Caco-2 (cell line): ENCODE measurements at regions of chr12 and their contacts with region 1.

Region 1: DNA sequence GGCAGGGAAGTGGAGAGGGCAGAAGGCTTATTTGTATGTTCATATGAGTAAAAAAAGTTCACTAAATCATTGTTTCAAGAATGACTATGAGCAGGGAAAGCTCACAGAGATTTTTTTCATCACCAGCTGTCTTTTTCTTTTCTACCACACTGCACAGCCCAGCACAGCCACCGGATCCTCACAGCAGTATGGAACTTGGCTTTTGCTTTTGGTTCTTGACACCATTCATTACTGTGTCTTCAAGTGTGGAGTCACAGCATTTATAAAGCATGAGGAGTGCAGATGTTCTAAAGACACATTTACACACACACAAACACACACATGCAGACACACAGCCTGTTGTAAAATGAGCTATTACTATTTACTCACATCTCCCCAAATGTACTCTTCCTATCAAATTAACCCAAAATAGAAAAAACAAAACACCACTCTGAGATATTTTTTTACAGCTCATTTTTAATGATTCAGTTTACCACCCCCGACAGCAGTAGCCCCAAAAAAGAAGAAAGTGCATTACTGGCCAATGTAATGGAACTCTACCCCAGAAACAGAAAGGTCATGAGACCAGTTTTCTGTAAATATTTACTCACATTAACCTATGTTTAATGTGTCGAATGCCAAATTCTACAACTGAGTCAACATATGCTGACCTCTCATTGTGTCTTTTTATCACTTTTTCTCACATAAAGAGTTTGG is 60.5 kb downstream of the BTG1 start:
- DNase-seq: no peak
- H3K4me3 ChIP-seq: no peak overlapping the region
- H3K4me3 Mint-ChIP-seq: no peak overlapping the region
- H3K27ac Mint-ChIP-seq: no peak overlapping the region
- H3K4me1 ChIP-seq: peaks cover 16% of the 10 kb centered on the region
- H3K4me1 Mint-ChIP-seq: peaks cover 18% of the 10 kb centered on the region
- H3K27me3 ChIP-seq: no peaks in the 10 kb centered on the region
- H3K27me3 Mint-ChIP-seq: no peaks in the 10 kb centered on the region
- CTCF ChIP-seq: no peak

Region 2: DNA sequence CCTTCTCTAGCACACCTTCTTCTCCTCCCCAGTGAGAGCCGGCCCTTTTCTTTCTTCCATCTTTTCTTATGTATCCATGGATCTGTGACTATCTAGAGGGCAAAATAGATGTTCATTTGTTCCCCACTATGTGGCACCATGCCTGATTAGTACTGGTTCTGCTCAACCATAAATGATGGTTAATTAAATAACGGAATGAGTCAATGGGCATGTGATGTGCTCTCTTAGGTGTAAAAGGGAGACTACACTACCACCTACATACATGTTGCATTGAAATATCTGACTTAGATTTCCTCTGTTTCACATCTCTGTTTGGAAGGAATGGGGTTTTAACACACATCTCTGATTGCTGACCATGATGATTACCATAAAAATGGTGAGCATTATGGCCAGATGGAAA is 56.1 kb before region 1 on chr12:
- CTCF ChIA-PET with region 1: no interaction called
- POLR2A ChIA-PET with region 1: interaction called, 10 read pairs
- intact Hi-C with region 1: no loop called
- DNase-seq: no peak
- H3K4me3 ChIP-seq: no peak overlapping the region
- H3K4me3 Mint-ChIP-seq: no peak overlapping the region
- H3K27ac Mint-ChIP-seq: no peak overlapping the region
- H3K4me1 ChIP-seq: 0 out of 2 replicates have a peak, but pooled peaks cover 3% of the 10 kb centered on the region
- H3K4me1 Mint-ChIP-seq: no peaks in the 10 kb centered on the region
- H3K27me3 ChIP-seq: no peaks in the 10 kb centered on the region
- H3K27me3 Mint-ChIP-seq: no peaks in the 10 kb centered on the region
- CTCF ChIP-seq: no peak

Region 3: DNA sequence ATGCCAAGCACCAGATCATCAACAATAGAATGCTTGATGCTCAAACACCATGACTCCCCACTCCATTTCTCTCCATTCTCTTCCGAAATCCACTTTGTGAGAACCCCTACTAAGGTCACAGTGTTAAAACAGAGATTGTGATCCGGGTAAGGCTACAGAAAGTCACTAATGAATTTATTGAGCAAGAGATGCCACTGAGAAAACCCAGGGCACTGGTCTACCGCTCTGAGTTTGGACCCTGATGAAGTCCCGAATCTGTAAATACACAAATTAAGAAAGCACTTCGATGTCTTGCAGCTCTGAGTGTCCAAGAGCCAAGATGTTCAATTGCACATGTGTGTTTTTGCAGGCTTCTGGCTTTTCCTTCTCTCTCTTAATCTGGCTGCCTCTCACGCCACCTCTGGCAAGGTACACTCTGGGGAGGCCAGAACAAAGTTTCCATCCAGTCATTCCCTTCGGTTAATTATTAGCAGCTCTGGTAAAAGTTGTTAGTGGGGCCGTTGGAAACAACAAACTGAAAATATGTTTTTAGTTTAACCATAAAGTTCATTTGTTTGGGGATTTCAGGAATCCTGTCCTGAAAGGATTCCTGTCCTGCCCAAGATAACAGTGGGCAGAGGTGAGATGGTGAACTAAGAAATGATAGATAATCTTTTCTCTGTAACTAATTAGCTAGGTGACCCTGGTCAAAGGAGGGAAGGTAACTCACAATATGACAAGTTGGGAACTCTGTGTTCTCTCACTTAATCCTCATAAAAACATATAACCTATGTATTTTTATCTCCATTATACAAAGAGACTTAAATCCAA is 14.9 kb before region 1 on chr12:
- CTCF ChIA-PET with region 1: interaction called, 3 read pairs
- POLR2A ChIA-PET with region 1: no interaction called
- intact Hi-C with region 1: loop called (anchors 1 kb)
- DNase-seq: peak; percentile 76 to 83
- H3K4me3 ChIP-seq: peak overlapping the region; percentile 9; the same call in 1 of the 2 replicates
- H3K4me3 Mint-ChIP-seq: peak overlapping the region; percentile 63
- H3K27ac Mint-ChIP-seq: peak overlapping the region; percentile 86
- H3K4me1 ChIP-seq: peaks cover 40% of the 10 kb centered on the region
- H3K4me1 Mint-ChIP-seq: peaks cover 20% of the 10 kb centered on the region
- H3K27me3 ChIP-seq: no peaks in the 10 kb centered on the region
- H3K27me3 Mint-ChIP-seq: no peaks in the 10 kb centered on the region
- CTCF ChIP-seq: peak in 1 of 2 experiments; percentile 38

Region 4: GRCh38 chr12:92111256-92111655 is 26.1 kb after region 1 on chr12:
- CTCF ChIA-PET with region 1: no interaction called
- POLR2A ChIA-PET with region 1: no interaction called
- intact Hi-C with region 1: no loop called
- DNase-seq: no peak
- H3K4me3 ChIP-seq: no peak overlapping the region
- H3K4me3 Mint-ChIP-seq: no peak overlapping the region
- H3K27ac Mint-ChIP-seq: no peak overlapping the region
- H3K4me1 ChIP-seq: no peaks in the 10 kb centered on the region
- H3K4me1 Mint-ChIP-seq: no peaks in the 10 kb centered on the region
- H3K27me3 ChIP-seq: no peaks in the 10 kb centered on the region
- H3K27me3 Mint-ChIP-seq: no peaks in the 10 kb centered on the region
- CTCF ChIP-seq: no peak

Region 5: DNA sequence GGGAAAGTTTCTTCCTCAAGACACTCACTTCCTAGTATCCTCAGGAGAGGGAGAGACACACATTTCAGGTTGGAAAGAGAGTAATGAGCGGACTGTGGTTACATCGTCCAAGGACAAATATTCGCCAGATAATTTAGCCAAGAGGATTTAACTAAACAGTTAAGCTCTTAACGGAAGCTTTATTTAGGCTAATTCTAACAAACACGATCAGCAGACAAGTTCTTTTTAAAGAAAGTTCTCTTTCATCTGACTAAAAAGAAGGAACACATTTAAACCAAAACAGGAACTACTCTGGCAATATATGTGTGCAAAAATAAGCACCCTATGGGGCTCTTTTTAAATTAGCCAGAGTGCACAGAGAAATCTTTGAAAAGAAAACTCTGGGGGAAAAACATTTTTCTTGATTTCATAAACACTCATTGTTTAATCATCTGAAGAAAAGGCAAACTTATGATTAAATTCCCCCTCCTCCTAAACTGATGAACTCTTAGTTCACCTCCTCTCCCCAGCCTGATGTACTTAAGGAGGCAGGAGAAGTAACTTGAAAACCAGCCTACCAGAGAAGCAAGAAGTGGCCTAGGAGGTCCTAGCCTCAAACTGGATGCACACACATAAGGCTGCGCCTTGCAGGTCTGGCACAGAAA is 73.7 kb after region 1 on chr12:
- CTCF ChIA-PET with region 1: no interaction called
- POLR2A ChIA-PET with region 1: no interaction called
- intact Hi-C with region 1: loop called (anchors 1 kb)
- DNase-seq: no peak
- H3K4me3 ChIP-seq: no peak overlapping the region
- H3K4me3 Mint-ChIP-seq: no peak overlapping the region
- H3K27ac Mint-ChIP-seq: no peak overlapping the region
- H3K4me1 ChIP-seq: peaks cover 49% of the 10 kb centered on the region
- H3K4me1 Mint-ChIP-seq: peaks cover 36% of the 10 kb centered on the region
- H3K27me3 ChIP-seq: no peaks in the 10 kb centered on the region
- H3K27me3 Mint-ChIP-seq: no peaks in the 10 kb centered on the region
- CTCF ChIP-seq: no peak